OCI-LY7 (cell line): ENCODE measurements at regions of chr12 and their contacts with region 1.

Region 1: GRCh38 chr12:1517007-1517406 is 77.4 kb downstream of the FBXL14 start:
- DNase-seq: peak; percentile 75
- H3K4me3 ChIP-seq: no peak overlapping the region
- H3K27ac ChIP-seq: no peak overlapping the region
- H3K4me1 ChIP-seq: peaks cover 13% of the 10 kb centered on the region
- CTCF ChIP-seq: peak; percentile 100

Region 2: GRCh38 chr12:1117970-1118563 is 398.9 kb before region 1 on chr12:
- CTCF ChIA-PET with region 1: interaction called, 4 read pairs
- POLR2A ChIA-PET with region 1: interaction called, 3 read pairs
- intact Hi-C with region 1: loop called (anchors 2 kb)
- DNase-seq: peak; percentile 81
- H3K4me3 ChIP-seq: no peak overlapping the region
- H3K27ac ChIP-seq: no peak overlapping the region
- H3K4me1 ChIP-seq: peaks cover 4% of the 10 kb centered on the region
- CTCF ChIP-seq: peak; percentile 99

Region 3: DNA sequence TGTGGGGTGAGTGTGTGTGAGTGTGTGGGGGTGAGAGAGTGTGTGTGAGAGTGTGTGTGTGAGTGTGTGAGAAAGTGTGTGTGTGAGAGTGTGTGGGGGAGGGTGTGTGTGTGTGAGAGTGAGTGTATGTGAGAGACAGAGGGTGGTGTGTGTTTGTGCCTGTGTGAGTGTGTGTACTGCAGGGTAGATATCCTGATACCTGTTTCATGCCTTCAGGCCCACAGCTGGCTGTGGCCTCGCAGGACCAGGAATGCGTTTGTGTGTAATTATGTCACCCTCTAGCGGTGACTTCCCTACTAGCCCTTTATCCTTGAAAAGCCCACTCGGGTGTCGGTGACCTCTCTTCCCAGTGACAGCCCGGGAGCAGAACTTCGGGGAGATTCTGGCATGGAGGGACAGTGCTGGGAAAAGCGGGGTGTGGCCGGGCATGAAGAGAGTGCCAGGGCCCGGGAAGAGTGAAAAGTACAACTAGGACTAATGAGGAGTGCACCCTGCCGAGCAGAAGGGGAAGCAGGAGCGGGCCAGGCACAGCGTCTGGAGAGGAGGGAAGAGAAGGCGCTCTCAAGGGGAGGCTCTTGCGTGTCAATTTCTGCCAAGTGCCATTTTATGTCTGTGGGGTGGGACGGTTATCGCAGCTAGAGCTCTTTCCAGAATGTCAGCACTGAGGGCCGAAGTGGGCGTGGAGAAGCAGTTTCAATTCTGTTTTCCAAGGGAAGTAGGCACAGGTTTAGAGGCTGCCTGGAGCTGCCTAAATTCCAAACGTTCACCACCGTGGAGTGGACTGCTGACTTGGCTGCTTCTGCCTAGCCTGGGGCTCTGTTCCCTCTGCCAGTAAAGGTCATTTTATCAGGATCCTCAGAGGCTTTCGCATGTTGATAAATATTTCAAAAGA is 88.4 kb after region 1 on chr12:
- CTCF ChIA-PET with region 1: no interaction called
- POLR2A ChIA-PET with region 1: no interaction called
- intact Hi-C with region 1: loop called (anchors 1 kb)
- DNase-seq: peak; percentile 85
- H3K4me3 ChIP-seq: peak overlapping the region; percentile 52
- H3K27ac ChIP-seq: no peak overlapping the region
- H3K4me1 ChIP-seq: peaks cover 60% of the 10 kb centered on the region
- CTCF ChIP-seq: peak; percentile 88